ENCODE measurements at regions of chrX and their contacts with region 1.

Region 1: GRCh38 chrX:23782863-23783568 is at the start of gene SAT1:
- DNase-seq: peak; percentile 92
- ATAC-seq: peak; percentile 88
- H3K4me3 Mint-ChIP-seq: peak within 1 kb of the TSS; percentile 93
- H3K27ac Mint-ChIP-seq: peak within 1 kb of the TSS; percentile 97
- H3K4me1 Mint-ChIP-seq: peaks cover 28% of the 10 kb centered on the region
- H3K27me3 Mint-ChIP-seq: no peaks in the 10 kb centered on the region
- total RNA-seq, gene SAT1: 145 to 147 TPM

Region 2: DNA sequence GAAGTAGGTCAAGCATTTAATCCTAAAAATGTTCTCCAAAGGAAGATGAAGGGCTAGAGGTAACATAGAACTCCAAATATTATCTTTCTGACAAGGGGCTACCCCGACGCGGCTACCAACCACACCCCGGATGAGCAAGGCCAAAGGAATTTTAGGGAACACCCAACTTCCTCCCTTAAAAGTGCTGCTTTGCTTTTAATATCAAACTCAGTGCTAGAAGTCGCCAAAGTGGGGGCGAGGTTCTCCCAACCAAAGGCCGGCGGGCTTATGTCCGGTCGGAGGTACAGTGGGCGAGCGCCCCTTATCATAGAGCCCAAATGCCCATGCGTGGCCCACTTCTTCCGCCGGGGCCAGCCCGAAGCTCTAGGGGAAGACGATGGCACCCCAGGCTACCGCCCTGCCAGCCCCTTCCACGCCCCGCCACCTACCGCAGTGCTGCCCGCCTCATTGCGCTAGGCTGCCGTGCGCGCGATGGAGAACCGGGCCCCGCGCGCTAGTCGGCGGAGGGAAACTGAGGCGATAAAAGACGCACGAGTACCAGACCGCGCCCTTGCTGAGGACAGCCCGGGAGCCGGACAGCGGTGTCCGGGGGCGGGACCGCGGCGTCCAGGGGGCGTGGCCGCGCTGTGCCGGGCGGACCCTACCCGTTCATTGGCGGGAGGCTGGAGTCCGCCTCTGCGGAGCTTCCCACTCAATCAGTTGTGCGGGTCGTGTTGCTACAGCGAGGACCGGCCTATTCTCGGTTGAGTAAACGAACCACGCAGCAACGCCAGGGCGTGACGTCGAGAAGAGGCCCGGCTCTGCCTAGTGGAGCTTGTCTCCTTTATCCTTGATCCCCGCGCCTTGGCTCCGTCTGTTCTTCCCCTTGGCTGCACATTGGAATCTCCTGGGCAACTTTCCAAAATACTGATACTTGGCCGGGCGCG is 40.1 kb before region 1 on chrX and contains the start of gene ACOT9:
- POLR2A ChIA-PET with region 1: interaction called, 33 read pairs
- DNase-seq: peak; percentile 76
- ATAC-seq: peak; percentile 96
- H3K4me3 Mint-ChIP-seq: peak within 1 kb of the TSS; percentile 89
- H3K27ac Mint-ChIP-seq: peak within 1 kb of the TSS; percentile 88
- H3K4me1 Mint-ChIP-seq: peaks cover 21% of the 10 kb centered on the region
- H3K27me3 Mint-ChIP-seq: no peaks in the 10 kb centered on the region
- total RNA-seq, gene ACOT9: 27.6 to 28.4 TPM

Region 3: DNA sequence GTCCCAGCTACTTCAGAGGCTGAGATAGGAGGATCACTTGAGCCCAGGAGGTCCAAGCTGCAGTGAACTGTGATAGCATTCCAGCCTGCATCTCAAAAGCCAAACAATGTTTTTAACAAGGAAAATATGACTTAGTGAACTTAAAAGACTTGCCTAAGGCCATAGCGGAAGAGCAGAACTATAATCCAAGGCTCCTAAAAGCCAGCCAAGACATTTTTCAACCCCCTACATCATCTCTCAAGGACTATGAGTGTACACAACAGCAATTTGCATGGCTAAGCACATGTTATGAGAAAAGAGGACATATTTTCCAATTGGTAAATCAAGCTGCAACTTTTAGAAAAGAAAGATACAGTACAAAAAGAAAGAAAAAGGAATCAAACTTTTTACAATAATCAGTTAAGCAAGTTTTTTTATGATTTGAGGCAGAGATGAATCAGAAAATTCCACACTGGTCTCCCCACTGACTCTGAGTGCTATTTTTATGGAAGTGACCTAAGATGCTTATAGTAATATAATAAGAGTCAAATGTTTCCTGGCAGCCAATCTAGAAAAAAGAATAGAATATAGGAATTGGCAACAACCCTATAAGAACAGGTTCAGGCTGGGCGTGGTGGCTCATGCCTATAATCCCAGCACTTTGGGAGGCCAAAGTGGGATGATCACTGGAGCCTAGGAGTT is 30.1 kb before region 1 on chrX:
- POLR2A ChIA-PET with region 1: interaction called, 11 read pairs
- DNase-seq: no peak
- ATAC-seq: no peak
- H3K4me3 Mint-ChIP-seq: no peak overlapping the region
- H3K27ac Mint-ChIP-seq: no peak overlapping the region
- H3K4me1 Mint-ChIP-seq: peaks cover 4% of the 10 kb centered on the region
- H3K27me3 Mint-ChIP-seq: no peaks in the 10 kb centered on the region

Region 4: GRCh38 chrX:23766650-23767551 is 16.1 kb before region 1 on chrX:
- POLR2A ChIA-PET with region 1: interaction called, 54 read pairs
- DNase-seq: no peak
- ATAC-seq: peak; percentile 65
- H3K4me3 Mint-ChIP-seq: peak overlapping the region; percentile 42
- H3K27ac Mint-ChIP-seq: no peak overlapping the region
- H3K4me1 Mint-ChIP-seq: no peaks in the 10 kb centered on the region
- H3K27me3 Mint-ChIP-seq: no peaks in the 10 kb centered on the region

Region 5: DNA sequence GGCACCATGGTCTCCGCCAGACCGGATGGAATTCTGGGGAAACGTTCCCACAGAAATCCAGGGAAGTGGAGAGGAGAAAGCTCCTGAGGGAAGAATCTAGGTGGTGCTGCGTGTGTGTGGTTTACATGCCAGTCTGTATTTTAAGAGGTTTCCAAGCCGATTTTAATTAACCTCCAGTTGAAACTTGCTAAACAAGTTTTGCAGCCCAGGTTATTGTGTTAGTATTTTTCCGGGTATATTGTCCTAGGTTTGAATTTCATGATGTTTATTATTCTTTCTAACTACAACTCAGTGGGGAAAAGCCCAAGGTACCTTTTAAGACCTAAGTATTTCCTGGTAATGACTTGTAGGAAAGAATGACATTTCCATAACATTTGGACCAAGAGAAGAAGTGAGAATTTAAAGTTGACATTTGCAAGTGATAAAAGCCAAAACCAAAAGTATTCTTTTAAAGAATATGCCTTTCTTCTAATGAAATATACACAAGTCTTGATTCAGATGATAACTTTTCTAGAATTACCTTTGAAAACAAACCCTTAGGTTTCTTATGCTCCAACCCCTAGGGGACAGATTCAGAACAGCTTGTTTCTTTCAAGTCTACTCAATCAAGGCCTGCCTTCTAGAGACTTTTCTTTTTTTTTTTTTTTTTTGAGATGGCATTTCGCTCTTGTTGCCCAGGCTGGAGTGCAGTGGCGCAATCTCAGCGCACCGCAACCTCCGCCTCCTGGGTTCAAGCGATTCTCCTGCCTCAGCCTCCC is 14.5 kb after region 1 on chrX:
- POLR2A ChIA-PET with region 1: no interaction called
- DNase-seq: no peak
- ATAC-seq: no peak
- H3K4me3 Mint-ChIP-seq: no peak overlapping the region
- H3K27ac Mint-ChIP-seq: no peak overlapping the region
- H3K4me1 Mint-ChIP-seq: peaks cover 1% of the 10 kb centered on the region
- H3K27me3 Mint-ChIP-seq: no peaks in the 10 kb centered on the region

Region 6: DNA sequence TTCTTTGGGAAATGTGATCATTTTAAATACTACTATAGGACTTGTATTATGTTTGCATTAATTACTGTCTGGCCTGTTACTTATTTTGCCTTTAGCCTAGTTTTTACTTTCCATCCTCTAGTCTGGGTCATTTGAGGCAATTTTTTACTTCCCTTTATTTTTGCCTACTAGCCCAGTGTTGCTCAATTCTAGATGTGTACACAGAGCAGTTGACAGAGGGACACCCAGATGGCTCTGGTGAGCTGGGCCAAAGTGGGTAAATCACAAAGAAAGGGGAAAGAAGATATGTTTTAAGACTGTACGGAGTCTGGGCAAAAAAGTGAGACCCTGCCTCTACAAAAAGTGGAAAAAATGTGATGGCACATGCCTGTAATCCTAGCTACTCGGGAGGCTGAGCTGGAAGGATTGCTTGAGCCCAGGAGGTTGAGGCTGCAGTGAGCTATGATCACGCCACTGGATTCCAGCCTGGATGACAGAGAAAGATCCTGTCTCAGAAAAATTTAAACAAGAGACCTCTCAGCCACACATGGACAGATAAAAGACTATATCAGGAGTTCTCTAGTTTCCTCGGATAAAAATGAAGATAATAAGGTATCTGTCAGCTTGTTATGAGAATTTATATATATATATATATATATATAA is 89.0 kb after region 1 on chrX:
- POLR2A ChIA-PET with region 1: no interaction called
- DNase-seq: no peak
- ATAC-seq: no peak
- H3K4me3 Mint-ChIP-seq: no peak overlapping the region
- H3K27ac Mint-ChIP-seq: no peak overlapping the region
- H3K4me1 Mint-ChIP-seq: no peaks in the 10 kb centered on the region
- H3K27me3 Mint-ChIP-seq: no peaks in the 10 kb centered on the region

Region 7: GRCh38 chrX:23901805-23902204 is 118.8 kb after region 1 on chrX:
- POLR2A ChIA-PET with region 1: interaction called, 59 read pairs
- DNase-seq: no peak
- ATAC-seq: peak; percentile 91
- H3K4me3 Mint-ChIP-seq: no peak overlapping the region
- H3K27ac Mint-ChIP-seq: no peak overlapping the region
- H3K4me1 Mint-ChIP-seq: peaks cover 8% of the 10 kb centered on the region
- H3K27me3 Mint-ChIP-seq: no peaks in the 10 kb centered on the region

Region 8: DNA sequence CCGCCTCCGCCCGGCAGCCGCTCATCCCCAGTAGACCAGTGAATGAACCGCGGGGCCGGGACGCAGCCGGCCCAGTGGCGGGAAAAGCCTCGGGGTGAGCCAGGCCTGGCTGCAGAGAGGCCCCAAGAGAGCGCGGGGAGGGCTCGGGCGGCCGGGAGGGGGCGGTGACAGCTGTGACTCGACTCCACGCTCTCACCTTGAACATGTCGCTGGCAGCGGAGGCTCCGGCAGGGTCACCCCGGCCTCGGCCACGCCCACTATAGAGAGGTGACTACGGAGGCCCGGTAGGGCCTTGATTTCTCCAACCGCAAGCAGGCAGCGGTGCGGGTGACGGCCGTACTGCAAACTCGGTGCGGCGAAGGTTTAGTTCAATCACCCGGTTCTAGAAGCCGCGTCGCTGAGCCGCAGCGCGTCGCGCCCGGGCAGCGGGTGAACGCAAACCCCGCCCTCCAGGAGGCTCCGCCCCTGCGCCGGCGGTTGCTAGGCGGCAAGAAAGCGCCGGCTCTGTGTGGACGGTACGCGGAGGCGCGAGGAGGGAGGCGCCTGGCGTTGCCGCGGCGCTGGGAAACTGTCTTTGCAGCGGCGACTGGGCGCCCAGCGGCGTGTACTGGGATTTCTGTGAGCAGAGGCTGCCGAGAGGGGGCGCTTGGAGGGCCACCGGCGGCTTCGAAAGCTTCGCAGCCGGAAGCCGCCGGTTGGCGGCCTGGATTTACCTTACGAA is 124.6 kb after region 1 on chrX and contains the starts of genes APOO and CXorf58:
- POLR2A ChIA-PET with region 1: interaction called, 59 read pairs
- DNase-seq: peak; percentile 91
- ATAC-seq: peak; percentile 96
- H3K4me3 Mint-ChIP-seq: peak within 1 kb of the TSS; percentile 84
- H3K27ac Mint-ChIP-seq: peak within 1 kb of the TSS; percentile 89
- H3K4me1 Mint-ChIP-seq: peaks cover 11% of the 10 kb centered on the region
- H3K27me3 Mint-ChIP-seq: no peaks in the 10 kb centered on the region
- total RNA-seq, gene APOO: 23.8 to 24.2 TPM
- total RNA-seq, gene CXorf58: not detected

Region 9: DNA sequence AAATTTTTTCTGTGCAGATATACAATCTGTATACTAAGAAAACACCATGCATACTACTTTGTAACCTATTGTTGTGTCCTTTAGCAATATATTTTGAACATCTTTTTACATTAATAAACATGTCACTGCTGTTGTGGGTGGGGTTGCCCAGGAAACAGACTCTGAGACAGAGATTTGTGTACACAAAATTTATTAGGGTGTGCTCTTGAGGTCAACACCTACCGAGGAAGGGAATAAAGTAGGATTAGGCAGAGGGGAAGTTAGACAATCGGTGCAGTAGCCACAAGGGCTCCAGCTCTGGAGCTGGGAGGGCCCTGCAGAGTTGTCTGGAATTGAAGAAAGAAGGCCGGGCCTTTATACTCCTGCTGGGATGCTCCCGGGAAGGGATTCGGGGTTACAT is 181.2 kb after region 1 on chrX:
- POLR2A ChIA-PET with region 1: no interaction called
- DNase-seq: no peak
- ATAC-seq: no peak
- H3K4me3 Mint-ChIP-seq: no peak overlapping the region
- H3K27ac Mint-ChIP-seq: no peak overlapping the region
- H3K4me1 Mint-ChIP-seq: peaks cover 10% of the 10 kb centered on the region
- H3K27me3 Mint-ChIP-seq: no peaks in the 10 kb centered on the region

Region 10: DNA sequence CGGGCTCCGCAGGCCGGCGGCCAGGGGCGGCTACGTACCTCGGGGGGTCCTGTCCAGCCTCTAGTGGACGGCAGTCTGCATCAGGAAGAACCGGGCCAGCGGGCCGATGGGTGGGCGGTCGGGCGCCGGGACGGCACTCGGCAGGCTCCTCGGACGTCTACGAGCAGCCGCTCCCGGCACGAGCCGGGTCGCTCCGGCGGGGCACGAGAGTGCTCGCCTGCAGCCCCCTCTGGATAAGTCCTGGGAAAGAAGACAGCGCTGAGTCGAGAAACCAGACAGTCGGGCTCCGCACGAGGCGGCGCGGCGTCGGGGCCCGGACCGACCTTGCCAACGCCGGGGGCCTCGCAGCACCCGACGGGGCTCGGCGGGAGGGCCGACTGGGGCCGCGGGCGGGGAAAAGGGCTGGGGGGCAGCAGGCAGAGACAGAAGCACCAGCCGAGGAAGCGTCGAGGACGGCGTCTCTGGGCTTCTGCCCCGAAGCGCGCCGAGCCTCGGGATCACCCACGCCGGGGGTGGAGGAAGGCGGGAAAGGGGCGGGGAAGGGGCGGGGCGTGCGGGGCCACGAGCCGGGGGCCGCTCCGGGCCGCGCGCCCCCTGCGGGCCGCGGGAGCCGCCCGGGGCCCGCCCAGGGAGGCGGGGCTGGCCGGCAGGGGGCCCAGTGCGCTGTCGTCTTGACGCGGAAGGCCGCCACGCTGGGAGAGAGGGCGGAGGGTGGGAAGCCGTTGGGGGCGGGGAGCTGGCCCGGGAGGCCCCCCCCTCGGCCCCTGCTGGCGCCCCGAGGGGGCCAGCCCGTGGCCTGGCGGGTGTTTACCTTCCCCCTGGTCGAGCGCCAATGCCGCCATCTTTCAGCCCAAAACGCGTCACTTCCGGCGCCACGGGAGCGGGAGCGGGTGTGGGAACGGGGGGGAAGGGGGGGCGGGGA is 242.1 kb after region 1 on chrX:
- POLR2A ChIA-PET with region 1: interaction called, 15 read pairs
- DNase-seq: peak; percentile 86
- ATAC-seq: peak; percentile 94
- H3K4me3 Mint-ChIP-seq: peak overlapping the region; percentile 96
- H3K27ac Mint-ChIP-seq: peak overlapping the region; percentile 86
- H3K4me1 Mint-ChIP-seq: peaks cover 11% of the 10 kb centered on the region
- H3K27me3 Mint-ChIP-seq: no peaks in the 10 kb centered on the region

Measured in activated naive CD8-positive, alpha-beta T cell treated with anti-CD3 and anti-CD28 coated beads, Interleukin-2, amount 10 ng/mL, durations not matched to agents 7 days and 5 days (primary cell).